ENCODE measurements at regions of chr2 and their contacts with region 1.

Region 1: GRCh38 chr2:27071277-27071989 is at the start of gene OST4:
- DNase-seq: peak; percentile 92
- ATAC-seq: peak; percentile 93
- H3K4me3 Mint-ChIP-seq: peak within 1 kb of the TSS; percentile 99
- H3K27ac Mint-ChIP-seq: peak within 1 kb of the TSS; percentile 93
- H3K4me1 Mint-ChIP-seq: peaks cover 70% of the 10 kb centered on the region
- H3K27me3 Mint-ChIP-seq: no peaks in the 10 kb centered on the region
- total RNA-seq, gene OST4: 248 to 318 TPM

Region 2: GRCh38 chr2:26968001-26968400 is 103.4 kb before region 1 on chr2:
- CTCF ChIA-PET with region 1: no interaction called
- DNase-seq: no peak
- ATAC-seq: no peak
- H3K4me3 Mint-ChIP-seq: no peak overlapping the region
- H3K27ac Mint-ChIP-seq: no peak overlapping the region
- H3K4me1 Mint-ChIP-seq: peaks cover 12% of the 10 kb centered on the region
- H3K27me3 Mint-ChIP-seq: peaks cover 48% of the 10 kb centered on the region

Region 3: DNA sequence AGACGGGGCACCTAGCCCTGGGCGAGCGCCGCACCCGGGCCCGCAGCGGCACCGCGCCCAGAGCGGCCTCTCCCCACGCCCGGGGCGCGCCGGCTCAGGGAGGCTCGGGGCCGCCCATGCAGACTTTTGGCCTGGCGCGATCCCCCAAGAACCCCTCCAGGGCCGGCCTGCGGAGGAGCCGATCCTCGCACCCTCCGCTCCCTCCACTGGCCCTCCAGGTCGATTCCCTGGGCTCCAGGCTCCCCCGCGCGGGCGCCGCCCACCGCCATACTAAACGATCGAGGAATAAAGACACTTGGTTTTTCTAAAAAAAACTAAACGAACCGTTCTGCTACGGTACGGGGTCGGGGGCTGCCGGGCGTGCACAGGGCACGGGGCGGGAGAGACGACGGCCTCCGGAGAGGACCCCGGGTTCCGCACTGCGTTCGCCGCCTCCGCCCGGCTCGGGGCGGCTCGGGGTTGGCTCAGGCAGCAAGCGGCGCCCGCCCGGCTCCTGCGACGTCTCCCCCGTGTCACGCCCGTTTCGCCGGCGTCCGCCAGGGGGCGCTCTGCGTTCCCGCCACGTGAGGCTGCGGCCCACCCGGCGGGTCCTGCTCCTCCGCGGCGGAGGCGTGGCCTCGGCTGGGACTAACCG is 14.8 kb after region 1 on chr2:
- CTCF ChIA-PET with region 1: interaction called, 37 read pairs
- DNase-seq: peak; percentile 97
- ATAC-seq: peak; percentile 91
- H3K4me3 Mint-ChIP-seq: peak overlapping the region; percentile 78
- H3K27ac Mint-ChIP-seq: peak overlapping the region; percentile 85
- H3K4me1 Mint-ChIP-seq: peaks cover 31% of the 10 kb centered on the region
- H3K27me3 Mint-ChIP-seq: no peaks in the 10 kb centered on the region

Region 4: DNA sequence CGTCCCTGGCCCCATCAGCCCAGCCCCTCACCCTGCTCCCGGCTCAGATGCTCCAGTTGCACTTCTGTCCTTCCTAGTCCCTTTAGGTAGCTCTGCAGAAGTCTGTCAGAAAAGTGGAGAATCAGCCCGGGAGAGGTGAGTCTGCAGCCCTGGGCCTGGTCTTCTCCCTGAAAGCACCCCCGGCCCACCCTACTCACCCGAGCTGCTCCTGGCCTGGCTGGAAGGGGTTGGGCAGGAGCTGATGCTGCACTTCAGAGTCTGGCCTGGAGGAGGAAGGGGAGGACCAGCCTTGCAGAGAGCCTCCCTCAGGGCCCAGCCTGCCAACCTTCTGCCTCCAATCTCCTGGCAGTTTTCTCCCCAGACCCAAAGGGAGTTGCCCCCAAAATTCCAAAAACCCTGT is 30.9 kb after region 1 on chr2:
- CTCF ChIA-PET with region 1: no interaction called
- DNase-seq: no peak
- ATAC-seq: no peak
- H3K4me3 Mint-ChIP-seq: no peak overlapping the region
- H3K27ac Mint-ChIP-seq: no peak overlapping the region
- H3K4me1 Mint-ChIP-seq: no peaks in the 10 kb centered on the region
- H3K27me3 Mint-ChIP-seq: peaks cover 4% of the 10 kb centered on the region

Region 5: DNA sequence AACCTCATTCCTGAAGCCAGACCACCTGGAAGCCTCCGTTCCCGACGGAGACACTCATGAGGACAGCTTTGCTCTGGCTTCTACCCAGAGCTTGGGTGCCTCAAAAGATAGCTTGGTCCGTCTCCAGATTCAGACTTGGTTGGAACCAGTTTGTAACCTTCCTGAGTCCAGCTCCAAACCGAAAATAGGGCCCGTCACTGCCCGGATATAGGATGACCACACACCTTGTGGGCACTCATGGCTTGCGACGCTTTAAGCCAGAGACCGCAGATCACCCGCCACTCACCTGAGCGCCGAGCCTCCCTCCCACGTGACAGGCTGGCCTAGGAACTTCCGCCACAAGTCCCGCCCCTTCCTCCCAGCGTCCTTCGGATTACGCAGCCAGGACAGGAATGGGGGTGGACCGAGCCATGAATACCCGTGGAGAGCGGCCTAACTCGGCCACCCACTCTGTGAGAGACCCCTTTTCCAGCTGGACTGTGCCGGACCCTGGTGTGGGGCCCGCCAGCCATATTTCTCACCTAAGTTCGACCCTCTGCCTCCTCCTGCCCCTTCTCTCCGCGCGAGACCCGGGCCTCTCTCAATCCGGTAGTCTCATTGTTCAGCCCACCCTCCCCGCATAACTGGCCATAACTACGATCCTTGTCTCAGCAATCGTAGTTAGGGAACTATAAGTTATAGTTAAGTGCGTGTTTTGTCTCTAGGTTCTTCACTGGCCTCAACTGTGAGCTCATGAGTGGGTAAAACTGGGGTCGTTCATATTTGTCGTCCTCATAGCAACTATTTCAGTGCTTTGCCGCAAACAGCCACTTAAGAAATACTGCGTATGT is 251.5 kb after region 1 on chr2 and contains the start of gene MPV17:
- CTCF ChIA-PET with region 1: no interaction called
- DNase-seq: peak; percentile 93
- ATAC-seq: peak; percentile 97
- H3K4me3 Mint-ChIP-seq: peak within 1 kb of the TSS; percentile 92
- H3K27ac Mint-ChIP-seq: peak within 1 kb of the TSS; percentile 92
- H3K4me1 Mint-ChIP-seq: peaks cover 19% of the 10 kb centered on the region
- H3K27me3 Mint-ChIP-seq: no peaks in the 10 kb centered on the region
- total RNA-seq, gene MPV17: 87.4 to 97.6 TPM